ENCODE measurements at regions of chr1 and their contacts with region 1.

Region 1: DNA sequence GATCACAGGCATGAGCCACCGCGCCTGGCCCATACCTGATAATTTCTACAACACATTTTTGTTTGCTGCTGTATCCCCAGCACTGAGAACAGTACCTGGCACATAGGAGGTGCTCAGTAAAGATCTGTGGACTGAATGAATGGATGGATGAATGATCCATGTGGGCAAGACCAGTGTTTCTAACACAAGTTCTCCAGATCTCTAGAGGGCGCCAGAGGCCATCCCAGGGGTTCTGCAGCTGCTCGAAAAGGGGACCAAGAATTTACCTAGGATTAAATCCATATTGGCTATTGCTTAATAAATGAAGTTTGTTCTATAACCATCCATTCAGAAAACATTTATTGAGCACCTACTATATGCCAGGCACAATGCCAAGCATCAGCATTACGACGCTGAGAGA is 167.7 kb downstream of the ACTL8 start:
- DNase-seq: peak in 1 of 2 donors; percentile 27
- ATAC-seq: no peak
- H3K4me3 ChIP-seq: no peak overlapping the region
- H3K27ac ChIP-seq: no peak overlapping the region
- H3K4me1 ChIP-seq: peaks cover 0 to 5% (median 0%) of the 10 kb centered on the region in 9 donors
- H3K27me3 ChIP-seq: peaks cover 0 to 65% (median 33%) of the 10 kb centered on the region in 7 donors
- CTCF ChIP-seq: peak in 7 of 9 donors; percentile 45 to 61 (median 51)

Region 2: DNA sequence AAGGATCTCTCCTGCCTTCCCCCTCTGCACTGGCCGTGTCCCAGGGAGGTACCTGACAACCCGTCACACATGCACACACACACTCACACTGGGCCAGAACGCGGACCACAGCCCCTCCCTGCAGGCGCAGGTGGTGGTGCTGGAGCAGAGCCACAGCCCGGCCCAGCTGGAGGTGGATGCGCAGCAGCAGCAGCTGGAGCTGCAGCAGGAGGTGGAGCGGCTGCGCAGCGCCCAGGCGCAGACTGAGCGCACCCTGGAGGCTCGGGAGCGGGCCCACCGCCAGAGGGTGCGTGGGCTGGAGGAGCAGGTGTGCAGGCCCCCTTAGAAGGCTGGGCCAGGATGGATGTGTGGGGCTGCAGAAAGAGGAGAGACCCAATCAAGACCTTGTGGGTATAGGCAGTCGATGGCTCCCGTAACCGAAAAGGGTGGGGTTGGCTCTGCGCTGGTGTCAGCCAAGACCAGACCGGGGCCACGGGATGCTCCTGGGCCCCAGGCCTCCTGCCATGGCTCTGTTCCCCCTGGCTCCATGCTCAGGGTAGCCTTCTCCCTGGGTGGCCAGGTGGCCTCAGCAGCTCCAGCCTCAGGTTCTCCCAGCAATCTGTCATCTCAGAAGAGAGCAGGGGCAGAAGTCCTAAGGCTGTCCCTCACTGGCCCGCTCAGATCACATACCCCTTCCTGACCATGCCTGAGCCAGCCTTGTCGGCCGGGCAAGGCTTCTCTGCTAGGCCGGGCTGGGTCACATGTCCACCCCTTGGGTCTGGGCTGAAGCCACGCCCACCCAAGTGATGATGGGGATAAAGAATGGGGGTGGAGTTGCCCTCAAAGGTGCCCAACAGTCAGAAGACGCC is 951.3 kb before region 1 on chr1:
- intact Hi-C with region 1: no loop called
- DNase-seq: no peak
- ATAC-seq: peak in 1 of 8 donors; percentile 32
- H3K4me3 ChIP-seq: no peak overlapping the region
- H3K27ac ChIP-seq: no peak overlapping the region
- H3K4me1 ChIP-seq: peaks cover 0 to 22% (median 11%) of the 10 kb centered on the region in 9 donors
- H3K27me3 ChIP-seq: no peaks in the 10 kb centered on the region
- CTCF ChIP-seq: no peak

Region 3: DNA sequence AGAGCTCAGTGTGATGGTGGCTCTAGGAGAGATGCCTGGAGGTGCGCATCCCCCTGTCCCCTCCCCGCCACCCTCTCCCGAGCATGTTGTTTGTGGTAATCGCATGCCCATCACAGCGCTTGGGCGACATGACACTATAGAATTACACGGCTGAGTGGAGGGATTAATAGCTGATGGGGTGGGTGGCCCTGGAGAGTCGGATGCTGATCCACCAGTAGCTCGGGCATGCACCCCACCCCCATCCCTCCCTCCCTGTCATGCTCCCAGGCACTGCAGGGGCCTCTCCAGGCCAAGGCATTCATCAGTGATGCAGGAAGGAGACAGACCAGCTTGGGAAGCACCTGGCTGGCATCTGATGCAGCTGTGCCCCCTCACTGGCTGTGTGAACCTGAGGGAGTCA is 25.8 kb after region 1 on chr1:
- intact Hi-C with region 1: no loop called
- DNase-seq: no peak
- ATAC-seq: no peak
- H3K4me3 ChIP-seq: no peak overlapping the region
- H3K27ac ChIP-seq: no peak overlapping the region
- H3K4me1 ChIP-seq: no peaks in the 10 kb centered on the region
- H3K27me3 ChIP-seq: peaks cover 0 to 54% (median 21%) of the 10 kb centered on the region in 7 donors
- CTCF ChIP-seq: no peak

Region 4: GRCh38 chr1:18091660-18092446 is 169.0 kb after region 1 on chr1:
- intact Hi-C with region 1: loop called in 1 of 10 experiments (anchors 10 kb)
- DNase-seq: no peak
- ATAC-seq: peak in 1 of 8 donors; percentile 65
- H3K4me3 ChIP-seq: no peak overlapping the region
- H3K27ac ChIP-seq: no peak overlapping the region
- H3K4me1 ChIP-seq: no peaks in the 10 kb centered on the region
- H3K27me3 ChIP-seq: peaks cover 0 to 84% (median 55%) of the 10 kb centered on the region in 7 donors
- CTCF ChIP-seq: no peak

Region 5: GRCh38 chr1:18100491-18101063 is 177.7 kb after region 1 on chr1:
- intact Hi-C with region 1: loop called in 5 of 10 experiments (anchors 5 to 10 kb)
- DNase-seq: peak; percentile 32 to 48
- ATAC-seq: peak in 5 of 8 donors; percentile 42 to 73 (median 55)
- H3K4me3 ChIP-seq: no peak overlapping the region
- H3K27ac ChIP-seq: no peak overlapping the region
- H3K4me1 ChIP-seq: no peaks in the 10 kb centered on the region
- H3K27me3 ChIP-seq: peaks cover 0 to 71% (median 36%) of the 10 kb centered on the region in 7 donors
- CTCF ChIP-seq: peak; percentile 47 to 82 (median 73)

Region 6: GRCh38 chr1:18229625-18230024 is 306.8 kb after region 1 on chr1:
- intact Hi-C with region 1: loop called in 3 of 10 experiments (anchors 10 kb)
- DNase-seq: no peak
- ATAC-seq: no peak
- H3K4me3 ChIP-seq: no peak overlapping the region
- H3K27ac ChIP-seq: no peak overlapping the region
- H3K4me1 ChIP-seq: no peaks in the 10 kb centered on the region
- H3K27me3 ChIP-seq: peaks cover 0 to 58% (median 36%) of the 10 kb centered on the region in 7 donors
- CTCF ChIP-seq: no peak

Region 7: DNA sequence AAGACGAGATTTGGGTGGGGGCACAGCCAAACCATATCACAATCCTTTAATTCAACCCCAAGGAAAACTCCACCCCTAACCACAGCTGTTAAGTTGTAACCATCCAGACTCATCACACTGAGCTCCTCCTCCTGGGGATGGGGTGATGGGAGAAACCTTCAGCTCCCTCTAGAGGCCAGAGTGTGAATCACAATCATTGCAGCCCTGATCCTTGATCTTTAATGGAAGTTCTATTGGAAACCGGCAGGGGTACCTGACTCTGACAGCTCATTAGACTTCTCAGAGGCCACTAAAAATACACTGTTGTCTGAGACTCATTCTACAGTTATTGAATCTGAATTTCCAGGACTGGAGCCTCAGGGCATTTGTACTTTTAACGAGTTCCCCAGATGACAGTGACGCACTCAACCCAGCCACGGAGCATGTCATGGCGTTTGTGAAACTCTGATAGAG is 312.0 kb after region 1 on chr1:
- intact Hi-C with region 1: loop called in 2 of 10 experiments (anchors 10 kb)
- DNase-seq: peak in 1 of 2 donors; percentile 6
- ATAC-seq: peak in 1 of 8 donors; percentile 67
- H3K4me3 ChIP-seq: no peak overlapping the region
- H3K27ac ChIP-seq: no peak overlapping the region
- H3K4me1 ChIP-seq: no peaks in the 10 kb centered on the region
- H3K27me3 ChIP-seq: peaks cover 0 to 57% (median 30%) of the 10 kb centered on the region in 7 donors
- CTCF ChIP-seq: peak; percentile 19 to 66 (median 58)

Measured in heart right ventricle (tissue), 16 donors.